Posterior cingulate gyrus (tissue), 11 donors: ENCODE measurements at regions of chr7 and their contacts with region 1.

Region 1: DNA sequence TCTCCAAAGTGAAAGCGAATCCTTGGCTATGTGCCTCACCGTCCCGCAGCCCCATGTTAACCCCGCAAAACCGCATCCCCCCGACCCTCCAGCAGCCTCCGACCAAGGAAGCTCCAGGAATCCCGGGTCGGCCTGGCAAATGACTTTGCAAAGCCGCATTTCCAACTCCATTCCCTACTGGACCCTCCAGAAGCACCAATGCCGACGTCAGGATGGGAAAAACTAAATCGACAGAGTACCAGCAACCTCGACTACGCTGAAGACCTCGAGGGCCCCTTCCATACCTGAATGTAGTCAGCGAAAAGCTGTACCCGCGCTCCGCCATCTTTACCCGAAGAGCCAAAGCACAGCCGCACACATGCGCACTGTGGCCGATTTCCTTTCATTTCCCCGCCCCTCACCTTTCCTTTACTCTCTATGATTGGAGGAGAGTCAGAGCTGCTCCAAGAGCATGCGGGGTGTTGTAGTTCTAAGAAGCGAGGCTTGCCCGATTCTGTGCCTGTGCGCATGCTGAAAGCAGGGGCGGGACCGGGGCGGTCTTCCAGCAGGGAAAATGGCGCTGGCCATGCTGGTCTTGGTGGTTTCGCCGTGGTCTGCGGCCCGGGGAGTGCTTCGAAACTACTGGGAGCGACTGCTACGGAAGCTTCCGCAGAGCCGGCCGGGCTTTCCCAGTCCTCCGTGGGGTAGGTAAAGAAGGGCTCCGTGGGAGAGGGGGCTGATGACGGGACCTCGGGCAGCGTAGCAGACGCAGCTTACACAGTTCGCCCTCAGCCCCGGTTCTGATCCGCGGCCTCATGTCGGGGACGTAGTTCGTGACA is at the starts of genes MRPL32 and PSMA2:
- DNase-seq: peak; percentile 93 to 99 (median 96)

Region 2: GRCh38 chr7:42661312-42661711 is 270.7 kb before region 1 on chr7:
- intact Hi-C with region 1: no loop called
- DNase-seq: no peak

Region 3: GRCh38 chr7:42911454-42912447 is 20.3 kb before region 1 on chr7 and contains the start of gene C7orf25:
- intact Hi-C with region 1: loop called (anchors 1 kb)
- DNase-seq: peak; percentile 97 to 100 (median 98)